HEK293 (cell line): ENCODE measurements at regions of chr10 and their contacts with region 1.

Region 1: DNA sequence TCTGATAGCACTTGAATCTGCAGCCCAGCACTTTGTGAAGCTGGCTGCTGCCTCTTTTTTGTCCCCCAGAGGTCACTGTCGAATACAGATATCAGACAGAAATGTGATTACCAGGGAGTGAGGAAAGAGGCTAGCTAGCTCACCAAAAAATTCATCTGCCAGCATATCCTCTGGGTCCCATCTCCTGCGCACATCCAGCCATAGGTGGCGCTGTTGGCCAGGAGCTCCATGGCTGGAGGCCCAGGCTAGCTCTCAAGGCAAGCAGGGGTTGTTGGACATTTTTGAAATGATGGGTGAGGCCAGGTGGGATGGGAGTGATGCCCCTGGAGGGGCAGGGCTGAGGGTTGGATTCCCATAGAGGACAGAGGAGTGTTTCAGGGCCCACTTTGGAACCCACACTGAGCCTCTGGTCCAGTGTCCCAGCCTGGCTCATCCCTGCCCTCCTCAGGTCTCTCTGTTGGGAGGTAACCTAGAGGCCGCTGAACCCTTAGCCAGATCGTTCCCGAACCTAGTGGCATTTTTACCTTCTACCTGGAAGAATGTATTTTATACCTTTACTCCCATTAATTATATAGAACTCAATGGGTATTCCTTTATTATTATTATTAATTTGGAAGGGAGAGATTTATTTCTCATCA is 14.8 kb downstream of the DPCD start:
- H3K4me3 ChIP-seq: no peak overlapping the region
- H3K27ac ChIP-seq: no peak overlapping the region
- H3K4me1 ChIP-seq: no peaks in the 10 kb centered on the region
- CTCF ChIP-seq: peak; percentile 98

Region 2: GRCh38 chr10:101587725-101588653 is 14.9 kb before region 1 on chr10 and contains the starts of genes DPCD and POLL:
- CTCF ChIA-PET with region 1: interaction called, 12 read pairs
- POLR2A ChIA-PET with region 1: interaction called, 3 read pairs
- H3K4me3 ChIP-seq: peak within 1 kb of the TSS; percentile 70
- H3K27ac ChIP-seq: peak within 1 kb of the TSS; percentile 72; the same call in 1 of the 2 replicates
- H3K4me1 ChIP-seq: peaks cover 8% of the 10 kb centered on the region
- CTCF ChIP-seq: no peak

Region 3: GRCh38 chr10:102064868-102065560 is 462.1 kb after region 1 on chr10 and contains the start of gene HPS6:
- CTCF ChIA-PET with region 1: no interaction called
- POLR2A ChIA-PET with region 1: no interaction called
- H3K4me3 ChIP-seq: peak within 1 kb of the TSS; percentile 76
- H3K27ac ChIP-seq: peak within 1 kb of the TSS; percentile 94
- H3K4me1 ChIP-seq: peaks cover 8% of the 10 kb centered on the region
- CTCF ChIP-seq: peak; percentile 72